Posterior vena cava (tissue), 2 donors: ENCODE measurements at regions of chr10 and their contacts with region 1.

Region 1: DNA sequence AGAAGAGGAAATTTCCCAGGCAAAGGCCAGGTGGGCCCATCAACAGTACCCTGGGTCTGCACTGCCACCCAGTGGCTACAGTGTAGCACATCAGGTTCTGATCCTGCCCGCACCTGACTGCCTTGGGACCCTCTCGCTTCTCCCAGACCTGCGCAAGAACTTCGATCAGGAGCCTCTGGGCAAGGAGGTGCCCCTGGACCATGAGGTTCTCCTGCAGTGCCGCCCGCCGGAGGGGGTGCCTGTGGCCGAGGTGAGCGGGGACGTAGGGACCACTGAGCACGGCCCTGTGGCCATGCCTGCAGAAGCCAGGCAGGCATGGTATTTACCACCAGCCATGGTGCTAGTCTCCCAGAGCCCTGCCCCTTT is 33.9 kb upstream of the SLC29A3 start:
- DNase-seq: no peak

Region 2: DNA sequence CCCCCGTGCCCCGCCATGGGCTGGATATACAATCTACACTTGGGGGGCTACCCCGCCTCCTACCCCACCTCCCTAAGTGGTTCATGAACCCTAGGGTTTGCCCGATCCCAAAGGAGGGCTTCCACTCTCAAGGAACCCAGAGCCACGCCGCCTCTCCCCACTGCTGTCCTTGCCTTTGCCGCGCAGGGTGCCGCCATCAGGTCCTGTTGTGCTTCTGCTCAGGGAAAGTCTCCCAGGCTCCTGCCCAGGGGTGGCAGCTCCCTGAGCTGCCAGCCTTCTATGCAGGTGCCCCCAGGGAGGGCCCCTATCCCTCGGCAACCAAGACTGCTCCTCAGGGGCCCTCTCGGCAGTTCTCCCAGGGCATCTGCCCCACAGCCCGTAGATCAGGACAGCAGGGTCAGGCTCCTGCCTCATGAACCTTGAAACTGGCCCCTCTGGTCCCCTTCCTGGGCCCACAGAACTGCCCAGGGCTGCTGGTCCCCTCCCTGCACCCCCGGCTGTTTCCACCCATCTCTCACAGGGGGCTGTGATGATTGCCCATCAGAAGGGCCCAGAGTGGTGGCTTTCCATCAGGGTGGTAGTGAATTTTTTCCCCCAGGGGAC is 383.8 kb before region 1 on chr10:
- intact Hi-C with region 1: loop called in 1 of 2 experiments (anchors 2 kb)
- DNase-seq: peak; percentile 58

Region 3: DNA sequence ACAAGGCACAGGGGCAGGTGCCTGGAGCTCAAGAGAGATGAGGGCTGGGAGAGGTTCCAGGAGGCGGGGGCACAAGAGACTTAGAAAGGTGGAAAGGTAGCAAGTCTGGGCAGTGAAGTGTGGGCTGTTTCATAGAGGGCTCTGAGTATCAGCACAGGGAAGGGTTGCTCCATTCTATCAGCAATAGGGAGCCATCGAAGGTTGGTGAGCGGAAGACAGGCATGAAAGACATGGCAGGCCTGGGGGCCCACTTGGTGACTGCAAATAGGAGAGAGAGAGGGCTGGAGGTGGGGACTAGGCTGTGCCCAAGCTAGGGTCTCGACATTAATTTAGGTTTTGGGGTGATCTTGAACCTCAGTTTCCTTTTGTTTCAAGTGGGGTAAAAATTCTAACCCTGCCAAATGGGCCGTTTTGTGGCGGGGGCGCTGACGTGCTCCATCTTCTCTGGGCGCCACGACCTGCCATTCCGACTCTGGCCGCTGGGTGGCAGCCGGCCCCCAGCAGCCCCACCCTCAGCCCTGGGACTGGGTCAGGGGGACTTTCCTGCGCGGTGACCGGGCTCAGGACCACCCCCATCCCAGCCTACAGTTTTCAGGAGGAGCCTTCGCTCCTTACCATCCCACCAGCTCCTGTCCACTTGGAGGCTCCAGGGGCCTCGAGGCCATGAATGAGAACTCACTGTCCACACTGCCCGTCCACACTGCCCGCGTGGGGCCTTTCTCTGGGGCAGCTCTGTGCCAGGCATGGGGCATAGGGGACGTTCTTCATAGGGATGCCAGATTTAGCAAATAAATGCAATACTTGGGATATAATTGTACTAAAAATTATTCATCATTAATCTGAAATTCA is 359.6 kb before region 1 on chr10:
- intact Hi-C with region 1: loop called in 1 of 2 experiments (anchors 5 kb)
- DNase-seq: peak; percentile 88

Region 4: GRCh38 chr10:71015674-71016073 is 269.5 kb before region 1 on chr10:
- intact Hi-C with region 1: no loop called
- DNase-seq: peak; percentile 15

Region 5: GRCh38 chr10:71359364-71360046 is 74.3 kb after region 1 on chr10:
- intact Hi-C with region 1: no loop called
- DNase-seq: no peak

Region 6: GRCh38 chr10:71462062-71462935 is 177.1 kb after region 1 on chr10:
- intact Hi-C with region 1: no loop called
- DNase-seq: no peak